ENCODE measurements at regions of chr19 and their contacts with region 1.

Region 1: GRCh38 chr19:35140962-35141637 is 2.0 kb upstream of the FXYD7 start:
- DNase-seq: peak; percentile 14
- H3K4me3 ChIP-seq: peak overlapping the region; percentile 12; the same call in 1 of the 2 replicates
- CTCF ChIP-seq: peak; percentile 73

Region 2: DNA sequence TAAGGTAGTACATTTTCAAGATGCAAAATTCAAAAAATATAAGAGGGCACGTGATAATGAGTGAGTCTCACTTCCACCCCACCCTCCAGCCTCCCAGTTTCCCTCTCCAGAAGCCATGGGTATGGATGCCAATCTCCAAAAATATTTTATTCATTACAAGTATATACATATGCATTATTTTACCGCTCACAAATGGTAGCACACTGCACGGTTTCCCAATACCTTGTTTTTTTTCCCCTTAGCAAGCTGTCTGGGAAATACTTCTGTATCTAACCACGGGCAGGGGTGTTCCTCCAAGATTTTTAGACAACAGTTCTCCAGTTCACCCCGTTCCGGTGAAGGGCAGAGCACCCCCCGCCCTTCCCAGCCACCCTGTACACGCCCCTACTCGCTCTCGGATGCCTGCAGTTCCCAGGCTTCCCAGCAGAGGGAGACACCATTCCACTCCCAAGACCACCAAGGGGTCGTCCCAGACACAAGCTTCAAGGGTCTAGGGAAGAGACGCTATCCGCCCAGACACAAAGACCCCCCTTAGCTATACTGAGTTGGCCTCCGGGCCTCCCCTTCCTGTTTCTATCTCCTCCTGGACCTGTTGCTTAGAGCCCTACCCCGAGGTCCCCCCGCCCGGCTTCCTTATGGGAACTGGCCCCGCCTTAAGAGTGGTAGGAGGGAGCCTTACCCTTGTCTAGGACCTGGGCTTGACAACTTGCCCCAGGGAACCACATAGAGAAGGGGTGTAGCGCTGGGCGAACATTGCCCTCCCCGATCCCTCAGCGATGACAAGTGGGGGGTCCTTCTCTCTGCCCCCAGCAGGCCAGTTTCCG is 26.5 kb before region 1 on chr19:
- CTCF ChIA-PET with region 1: interaction called, 78 read pairs
- POLR2A ChIA-PET with region 1: no interaction called
- DNase-seq: no peak
- H3K4me3 ChIP-seq: peak overlapping the region; percentile 6; the same call in 1 of the 2 replicates
- CTCF ChIP-seq: peak; percentile 96

Region 3: GRCh38 chr19:35124098-35125060 is 16.7 kb before region 1 on chr19:
- CTCF ChIA-PET with region 1: interaction called, 118 read pairs
- POLR2A ChIA-PET with region 1: interaction called, 3 read pairs
- DNase-seq: peak; percentile 33
- H3K4me3 ChIP-seq: peak overlapping the region; percentile 91
- CTCF ChIP-seq: no peak

Region 4: DNA sequence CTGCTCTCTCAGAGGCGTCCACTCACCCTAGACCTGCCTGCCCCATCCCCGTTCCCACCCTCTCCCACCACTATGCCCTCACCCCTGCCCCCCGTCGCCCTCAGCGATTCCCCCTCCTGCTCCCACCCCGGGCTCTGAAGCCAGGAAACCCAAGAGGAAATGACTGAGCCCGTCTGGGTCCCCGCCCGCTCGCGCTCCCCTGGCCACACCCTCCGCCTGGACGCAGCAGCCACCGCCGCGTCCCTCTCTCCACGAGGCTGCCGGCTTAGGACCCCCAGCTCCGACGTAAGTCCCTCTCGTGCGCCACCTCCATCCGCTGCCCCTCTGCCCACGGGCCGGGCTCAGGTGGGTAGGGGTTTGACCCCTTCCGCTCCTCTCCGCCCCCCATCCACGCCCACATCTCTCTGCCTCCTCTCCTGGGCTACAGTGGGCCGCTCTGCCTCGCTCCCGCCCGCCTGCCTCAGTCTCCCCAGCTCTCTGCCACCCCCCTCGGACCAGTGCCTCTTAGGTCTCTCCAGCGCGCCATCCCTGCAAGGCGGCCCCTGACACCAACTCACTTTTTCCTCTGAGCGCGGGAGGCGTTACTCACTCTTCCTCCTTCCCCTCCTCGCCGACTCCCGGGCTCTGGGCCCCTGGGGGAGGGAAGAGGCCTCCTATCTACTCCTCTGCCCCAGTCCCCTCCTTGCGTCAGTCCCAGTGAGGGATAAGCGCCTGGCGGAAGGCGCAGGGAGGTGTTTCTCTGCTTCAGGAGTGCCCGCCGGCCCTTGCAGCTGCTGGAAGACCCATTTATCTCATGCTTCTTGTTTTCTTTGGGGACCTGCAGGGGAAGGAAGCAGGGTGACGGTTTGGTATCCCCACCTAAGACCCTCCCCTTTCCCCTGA is 13.7 kb after region 1 on chr19 and contains the start of gene FXYD5:
- CTCF ChIA-PET with region 1: interaction called, 104 read pairs
- POLR2A ChIA-PET with region 1: interaction called, 10 read pairs
- DNase-seq: peak; percentile 29
- H3K4me3 ChIP-seq: peak within 1 kb of the TSS; percentile 89
- CTCF ChIP-seq: no peak

Region 5: GRCh38 chr19:35247526-35248306 is 106.6 kb after region 1 on chr19:
- CTCF ChIA-PET with region 1: no interaction called
- POLR2A ChIA-PET with region 1: no interaction called
- DNase-seq: no peak
- H3K4me3 ChIP-seq: no peak overlapping the region
- CTCF ChIP-seq: no peak